ENCODE measurements at regions of chr17 and their contacts with region 1.

Region 1: DNA sequence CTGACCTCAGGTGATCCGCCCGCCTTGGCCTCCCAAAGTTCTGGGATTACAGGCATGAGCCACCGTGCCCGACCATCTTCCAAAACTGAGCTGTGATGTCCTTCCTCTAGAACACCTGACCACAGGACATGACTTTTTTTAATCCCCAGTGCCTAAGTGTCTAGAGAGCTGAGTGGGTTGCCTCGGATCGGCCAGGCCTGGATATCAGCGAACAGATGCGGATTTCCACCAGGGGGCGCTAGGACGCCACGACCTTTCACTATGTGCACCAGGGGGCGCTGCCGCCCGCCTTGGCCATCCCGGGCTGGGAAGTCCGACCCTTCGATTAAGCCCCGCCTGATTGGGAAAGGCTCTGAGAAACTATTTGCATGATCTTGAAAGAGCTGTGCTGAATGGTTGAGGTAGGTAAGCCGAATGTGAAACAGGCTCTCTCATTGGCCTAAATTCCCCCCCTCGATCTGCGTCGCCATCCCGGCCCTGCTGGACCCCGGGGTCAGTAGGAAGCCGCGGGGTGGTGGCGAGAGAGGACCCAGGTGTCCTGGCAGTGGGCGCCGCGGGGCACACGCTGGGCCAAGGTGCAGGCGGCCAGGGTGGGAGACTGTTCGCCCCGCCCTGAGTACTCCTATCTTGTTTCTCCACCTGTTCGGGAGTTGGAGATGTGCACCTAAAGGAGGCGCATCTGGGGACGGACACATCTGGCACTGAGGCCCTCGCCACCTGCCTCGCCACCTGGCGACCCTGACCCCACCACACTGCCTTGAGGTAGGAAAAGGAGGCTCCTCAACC is at the start of gene ACBD4:
- DNase-seq: peak; percentile 99
- total RNA-seq, gene ACBD4: 10.8 to 12.9 TPM

Region 2: DNA sequence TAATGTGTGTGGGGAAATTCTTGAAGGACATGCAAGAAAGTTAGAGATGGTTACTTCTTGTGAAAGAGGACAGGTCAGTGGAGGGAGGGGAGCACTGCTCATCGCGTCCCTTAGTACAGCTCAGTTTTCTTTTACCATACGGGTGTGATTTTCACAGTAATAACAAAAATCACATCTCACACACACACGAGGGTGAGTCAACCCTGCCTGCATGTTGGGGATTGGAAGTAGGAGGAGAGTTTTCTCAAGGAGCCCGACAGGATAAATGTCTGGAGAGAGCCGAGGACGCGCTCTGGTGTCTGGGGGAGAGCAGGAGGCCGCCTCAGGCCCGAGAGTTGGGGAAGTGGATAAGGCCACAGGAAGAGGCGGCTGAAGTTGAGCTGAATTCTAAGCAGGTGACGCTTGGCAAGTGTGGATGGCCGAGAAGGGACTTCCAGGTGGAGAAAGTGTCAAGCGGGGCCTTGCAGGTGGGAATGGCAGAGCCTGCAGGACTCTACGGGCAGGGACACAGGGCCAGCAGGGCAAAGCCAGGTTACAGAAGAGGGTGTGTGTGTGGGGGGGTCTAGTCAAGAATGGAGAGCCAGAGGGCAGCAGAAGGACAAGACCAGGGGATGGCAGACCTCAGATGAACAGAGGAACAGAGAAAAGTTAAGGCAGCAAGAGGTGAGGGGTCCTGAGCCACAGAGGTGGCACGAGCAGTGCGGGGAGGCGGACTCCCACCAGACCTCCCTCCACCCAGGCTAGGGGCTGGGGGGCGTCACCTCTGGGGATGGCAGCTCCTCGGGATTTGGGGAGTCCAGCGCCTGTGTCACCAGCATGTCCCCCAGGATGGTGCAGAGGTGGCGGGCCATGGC is 19.3 kb before region 1 on chr17:
- intact Hi-C with region 1: no loop called
- DNase-seq: no peak

Region 3: DNA sequence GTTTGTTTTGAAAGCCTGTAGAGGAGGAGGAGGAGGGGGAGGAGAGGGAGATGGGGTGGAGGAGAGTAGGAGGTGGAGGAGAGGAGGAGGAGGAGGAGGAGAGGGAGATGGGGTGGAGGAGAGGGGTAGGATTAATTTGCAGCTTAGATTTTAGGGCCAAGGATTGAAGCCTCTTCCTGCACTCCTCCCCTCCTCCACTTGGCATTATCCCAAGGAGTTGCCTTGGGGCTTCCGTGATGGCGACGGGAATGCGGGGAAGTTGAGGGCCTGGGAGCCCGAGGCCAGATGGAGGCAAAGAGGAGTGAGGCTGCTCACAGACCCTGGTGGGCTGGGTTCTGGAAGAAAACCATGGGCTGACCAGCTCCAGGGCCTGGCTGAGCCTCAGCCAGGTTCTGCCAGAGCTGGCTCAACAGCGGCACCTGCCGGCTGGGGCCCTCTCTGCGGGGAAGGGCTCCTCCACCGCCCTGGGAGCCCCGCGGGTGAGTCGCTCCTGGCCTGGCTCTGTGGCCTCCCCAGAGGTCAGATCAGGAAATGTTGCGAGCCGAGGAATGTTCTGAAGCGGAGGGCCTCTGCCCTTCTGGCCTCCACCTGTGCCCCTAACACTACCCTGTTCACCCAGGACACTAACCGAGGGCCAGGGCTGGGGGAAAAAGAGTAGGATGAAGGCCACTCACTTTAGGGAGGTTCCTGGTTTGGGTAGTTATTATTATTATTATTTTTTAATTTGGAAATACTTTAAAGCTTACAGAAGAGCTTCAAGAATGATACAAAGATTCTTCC is 62.4 kb after region 1 on chr17:
- intact Hi-C with region 1: loop called (anchors 2 to 5 kb)
- DNase-seq: peak; percentile 97

Measured in posterior vena cava (tissue), 2 donors.